ENCODE measurements at regions of chr5 and their contacts with region 1.

Region 1: DNA sequence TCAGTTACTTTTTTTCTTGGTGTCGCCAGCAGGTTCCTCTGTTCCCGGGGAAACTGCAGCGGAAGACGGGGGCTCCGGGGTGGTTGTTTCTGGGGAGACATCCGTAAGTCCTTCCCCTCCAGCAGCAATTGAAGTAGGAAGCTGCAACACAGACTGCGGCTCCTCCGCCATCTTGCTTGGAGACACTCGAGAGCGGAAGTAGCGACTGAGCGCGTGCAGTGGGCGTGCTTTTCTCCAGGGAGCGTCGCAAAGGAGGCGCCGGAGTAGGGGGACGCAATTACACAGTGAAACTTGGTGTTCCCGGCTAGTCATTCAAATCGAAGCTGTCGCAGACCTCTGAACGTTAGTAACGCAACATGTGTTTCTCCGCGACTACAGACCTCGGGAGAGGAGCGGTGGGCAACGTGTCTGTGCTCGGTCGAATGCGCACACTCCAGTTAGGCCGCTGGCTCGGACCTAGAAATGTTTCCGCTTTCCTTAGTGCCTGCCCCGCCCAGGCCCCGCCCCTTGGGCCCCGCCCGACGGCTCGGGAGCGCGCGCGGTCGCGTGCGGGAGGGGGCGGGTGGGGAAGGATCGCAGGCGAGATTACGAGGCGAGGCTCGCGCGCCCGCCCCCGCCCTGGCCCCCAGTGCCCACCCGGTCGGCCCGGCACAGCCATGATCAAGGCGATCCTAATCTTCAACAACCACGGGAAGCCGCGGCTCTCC is at the starts of genes AP3S1 and ATG12:
- DNase-seq: peak; percentile 96
- total RNA-seq, gene AP3S1: 56.6 TPM
- total RNA-seq, gene ATG12: 22.5 TPM

Region 2: DNA sequence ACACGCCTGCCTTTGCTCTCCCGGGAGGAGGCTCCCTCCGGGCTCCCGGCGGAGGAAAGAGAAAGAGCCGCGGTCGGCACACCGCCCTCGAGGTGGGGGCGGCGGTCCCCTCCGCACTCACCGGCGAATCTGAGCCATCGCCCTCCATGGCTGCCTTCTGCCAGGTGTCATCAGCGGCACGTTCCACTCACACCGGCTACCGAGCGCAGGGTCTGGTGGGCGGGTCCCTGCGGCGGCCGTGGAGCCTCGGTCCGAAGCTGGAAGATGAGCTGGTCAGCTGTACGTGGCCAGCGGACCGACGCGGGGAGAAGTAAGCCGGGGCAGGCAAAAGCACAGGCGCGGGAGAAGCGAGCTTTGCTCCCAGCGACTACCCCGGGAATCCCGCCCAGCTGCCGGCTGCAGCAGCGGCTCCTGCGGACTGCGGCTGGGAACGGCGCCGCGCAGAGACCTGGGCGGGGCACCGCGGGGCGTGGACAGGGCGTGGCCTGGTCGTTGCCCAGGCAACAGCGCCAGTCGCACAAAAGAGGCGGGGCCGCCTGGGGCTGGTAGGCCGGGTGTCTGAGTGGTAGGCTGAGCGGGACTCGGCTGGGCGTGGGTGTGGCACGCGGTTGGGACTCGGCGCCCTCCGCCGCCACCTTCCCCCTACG is 671.9 kb before region 1 on chr5 and contains the start of gene TRIM36:
- intact Hi-C with region 1: loop called (anchors 10 kb)
- DNase-seq: peak; percentile 95
- total RNA-seq, gene TRIM36: 0.75 TPM

Region 3: GRCh38 chr5:115296124-115297022 is 545.2 kb before region 1 on chr5 and contains the start of gene CCDC112:
- intact Hi-C with region 1: loop called (anchors 5 kb)
- DNase-seq: peak; percentile 95
- total RNA-seq, gene CCDC112: 5.9 TPM

Region 4: GRCh38 chr5:115625579-115626444 is 215.7 kb before region 1 on chr5 and contains the start of gene TMED7:
- intact Hi-C with region 1: loop called (anchors 2 kb)
- DNase-seq: peak; percentile 100
- total RNA-seq, gene TMED7: 79.1 TPM

Region 5: GRCh38 chr5:115634343-115635132 is 207.0 kb before region 1 on chr5:
- intact Hi-C with region 1: loop called (anchors 2 kb)
- DNase-seq: peak; percentile 92